ENCODE measurements at regions of chr13 and their contacts with region 1.

Region 1: GRCh38 chr13:34567594-34567993 is 374.5 kb upstream of the NBEA start:
- DNase-seq: peak; percentile 41 to 64
- H3K4me3 ChIP-seq: no peak overlapping the region
- H3K4me3 Mint-ChIP-seq: peak overlapping the region; percentile 24
- H3K27ac Mint-ChIP-seq: peak overlapping the region; percentile 16
- H3K4me1 ChIP-seq: peaks cover 24% of the 10 kb centered on the region
- H3K4me1 Mint-ChIP-seq: peaks cover 25% of the 10 kb centered on the region
- H3K27me3 ChIP-seq: no peaks in the 10 kb centered on the region
- H3K27me3 Mint-ChIP-seq: no peaks in the 10 kb centered on the region
- CTCF ChIP-seq: no peak

Region 2: DNA sequence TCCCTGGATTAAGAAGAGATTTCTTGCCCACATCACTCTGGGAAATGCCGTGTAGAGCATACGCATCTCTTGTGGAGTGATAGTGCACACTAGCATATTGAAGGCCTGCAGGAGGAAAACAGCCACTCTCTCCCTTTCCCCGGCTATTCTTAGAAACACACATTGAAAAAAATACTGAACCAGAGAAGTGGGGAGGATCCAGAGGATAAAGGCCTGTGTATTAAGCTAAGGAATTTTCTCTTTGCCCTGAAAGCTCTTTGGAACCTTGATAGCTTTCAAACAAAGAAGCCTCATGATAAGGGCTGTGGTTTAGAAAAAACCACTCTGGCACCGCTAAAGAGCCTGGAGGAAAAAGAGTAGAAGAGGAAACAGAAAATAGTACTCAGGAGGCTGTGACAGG is 11.6 kb before region 1 on chr13:
- CTCF ChIA-PET with region 1: no interaction called
- POLR2A ChIA-PET with region 1: interaction called, 3 read pairs
- intact Hi-C with region 1: loop called (anchors 1 kb)
- DNase-seq: peak in 1 of 2 experiments; percentile 17
- H3K4me3 ChIP-seq: no peak overlapping the region
- H3K4me3 Mint-ChIP-seq: peak overlapping the region; percentile 11
- H3K27ac Mint-ChIP-seq: peak overlapping the region; percentile 78
- H3K4me1 ChIP-seq: peaks cover 28% of the 10 kb centered on the region
- H3K4me1 Mint-ChIP-seq: peaks cover 23% of the 10 kb centered on the region
- H3K27me3 ChIP-seq: no peaks in the 10 kb centered on the region
- H3K27me3 Mint-ChIP-seq: no peaks in the 10 kb centered on the region
- CTCF ChIP-seq: no peak

Region 3: GRCh38 chr13:34587576-34587975 is 20.0 kb after region 1 on chr13:
- CTCF ChIA-PET with region 1: no interaction called
- POLR2A ChIA-PET with region 1: no interaction called
- intact Hi-C with region 1: no loop called
- DNase-seq: no peak
- H3K4me3 ChIP-seq: no peak overlapping the region
- H3K4me3 Mint-ChIP-seq: no peak overlapping the region
- H3K27ac Mint-ChIP-seq: no peak overlapping the region
- H3K4me1 ChIP-seq: no peaks in the 10 kb centered on the region
- H3K4me1 Mint-ChIP-seq: no peaks in the 10 kb centered on the region
- H3K27me3 ChIP-seq: no peaks in the 10 kb centered on the region
- H3K27me3 Mint-ChIP-seq: no peaks in the 10 kb centered on the region
- CTCF ChIP-seq: no peak